ENCODE measurements at regions of chr22 and their contacts with region 1.

Region 1: GRCh38 chr22:36856121-36856791 is 4.5 kb upstream of the NCF4 start:
- DNase-seq: peak; percentile 84 to 99 (median 94)
- ATAC-seq: peak; percentile 71
- H3K4me3 ChIP-seq: no peak overlapping the region
- H3K4me3 Mint-ChIP-seq: peak overlapping the region; percentile 65
- H3K27ac ChIP-seq: no peak overlapping the region
- H3K27ac Mint-ChIP-seq: no peak overlapping the region
- H3K4me1 ChIP-seq: peaks cover 32% of the 10 kb centered on the region
- H3K4me1 Mint-ChIP-seq: peaks cover 17% of the 10 kb centered on the region
- H3K27me3 ChIP-seq: no peaks in the 10 kb centered on the region
- H3K27me3 Mint-ChIP-seq: peaks cover 5% of the 10 kb centered on the region
- CTCF ChIP-seq: peak; percentile 100

Region 2: GRCh38 chr22:36546092-36546804 is 310.0 kb before region 1 on chr22:
- CTCF ChIA-PET with region 1: no interaction called
- POLR2A ChIA-PET with region 1: no interaction called
- intact Hi-C with region 1: loop called in 1 of 2 experiments (anchors 5 kb)
- DNase-seq: peak in 7 of 14 experiments; percentile 9 to 60 (median 28)
- ATAC-seq: peak; percentile 61
- H3K4me3 ChIP-seq: no peak overlapping the region
- H3K4me3 Mint-ChIP-seq: no peak overlapping the region
- H3K27ac ChIP-seq: no peak overlapping the region
- H3K27ac Mint-ChIP-seq: no peak overlapping the region
- H3K4me1 ChIP-seq: peaks cover 14% of the 10 kb centered on the region
- H3K4me1 Mint-ChIP-seq: no peaks in the 10 kb centered on the region
- H3K27me3 ChIP-seq: peaks cover 0 to 2% of the 10 kb centered on the region in 2 experiments
- H3K27me3 Mint-ChIP-seq: peaks cover 39% of the 10 kb centered on the region
- CTCF ChIP-seq: no peak

Region 3: DNA sequence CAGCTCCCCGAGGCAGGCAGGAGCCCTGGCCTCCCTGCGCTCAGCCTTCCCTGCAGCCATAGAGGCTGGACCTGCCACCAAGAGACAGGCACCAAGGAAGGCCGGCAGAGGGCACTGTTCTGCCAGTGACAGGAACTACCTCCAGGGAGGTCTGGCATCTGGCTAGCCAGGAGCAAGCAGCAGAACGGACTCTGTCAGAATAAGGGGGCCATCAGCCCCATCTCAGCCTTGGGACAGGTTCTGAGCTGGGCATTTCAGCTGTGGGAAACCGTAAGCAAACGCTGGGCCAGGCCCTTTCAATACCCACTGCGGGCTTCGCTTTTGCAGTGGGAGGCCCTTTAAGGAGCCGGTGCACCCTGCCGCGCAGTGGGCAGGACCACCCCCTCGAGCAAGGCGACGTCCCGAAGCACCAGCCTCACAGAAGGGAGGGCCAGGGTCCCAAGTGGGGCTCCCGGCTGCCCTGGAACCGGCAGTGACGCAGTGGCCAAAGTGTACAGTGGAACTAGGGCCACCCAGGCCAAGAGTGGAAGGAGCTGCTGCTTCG is 98.5 kb before region 1 on chr22:
- CTCF ChIA-PET with region 1: interaction called, 3 read pairs
- POLR2A ChIA-PET with region 1: no interaction called
- intact Hi-C with region 1: loop called in 1 of 2 experiments (anchors 1 kb)
- DNase-seq: peak; percentile 58 to 83 (median 72)
- ATAC-seq: peak; percentile 79
- H3K4me3 ChIP-seq: no peak overlapping the region
- H3K4me3 Mint-ChIP-seq: no peak overlapping the region
- H3K27ac ChIP-seq: no peak overlapping the region
- H3K27ac Mint-ChIP-seq: no peak overlapping the region
- H3K4me1 ChIP-seq: peaks cover 4% of the 10 kb centered on the region
- H3K4me1 Mint-ChIP-seq: peaks cover 4% of the 10 kb centered on the region
- H3K27me3 ChIP-seq: peaks cover under 1 to 10% of the 10 kb centered on the region in 2 experiments
- H3K27me3 Mint-ChIP-seq: peaks cover 13% of the 10 kb centered on the region
- CTCF ChIP-seq: peak; percentile 75

Region 4: GRCh38 chr22:36781656-36782627 is 74.3 kb before region 1 on chr22:
- CTCF ChIA-PET with region 1: interaction called, 30 read pairs
- POLR2A ChIA-PET with region 1: interaction called, 16 read pairs
- intact Hi-C with region 1: loop called (anchors 1 kb)
- DNase-seq: peak; percentile 73 to 95 (median 87)
- ATAC-seq: peak; percentile 96
- H3K4me3 ChIP-seq: no peak overlapping the region
- H3K4me3 Mint-ChIP-seq: no peak overlapping the region
- H3K27ac ChIP-seq: no peak overlapping the region
- H3K27ac Mint-ChIP-seq: peak overlapping the region; percentile 33
- H3K4me1 ChIP-seq: peaks cover 16% of the 10 kb centered on the region
- H3K4me1 Mint-ChIP-seq: peaks cover 20% of the 10 kb centered on the region
- H3K27me3 ChIP-seq: no peaks in the 10 kb centered on the region
- H3K27me3 Mint-ChIP-seq: no peaks in the 10 kb centered on the region
- CTCF ChIP-seq: peak; percentile 97

Region 5: DNA sequence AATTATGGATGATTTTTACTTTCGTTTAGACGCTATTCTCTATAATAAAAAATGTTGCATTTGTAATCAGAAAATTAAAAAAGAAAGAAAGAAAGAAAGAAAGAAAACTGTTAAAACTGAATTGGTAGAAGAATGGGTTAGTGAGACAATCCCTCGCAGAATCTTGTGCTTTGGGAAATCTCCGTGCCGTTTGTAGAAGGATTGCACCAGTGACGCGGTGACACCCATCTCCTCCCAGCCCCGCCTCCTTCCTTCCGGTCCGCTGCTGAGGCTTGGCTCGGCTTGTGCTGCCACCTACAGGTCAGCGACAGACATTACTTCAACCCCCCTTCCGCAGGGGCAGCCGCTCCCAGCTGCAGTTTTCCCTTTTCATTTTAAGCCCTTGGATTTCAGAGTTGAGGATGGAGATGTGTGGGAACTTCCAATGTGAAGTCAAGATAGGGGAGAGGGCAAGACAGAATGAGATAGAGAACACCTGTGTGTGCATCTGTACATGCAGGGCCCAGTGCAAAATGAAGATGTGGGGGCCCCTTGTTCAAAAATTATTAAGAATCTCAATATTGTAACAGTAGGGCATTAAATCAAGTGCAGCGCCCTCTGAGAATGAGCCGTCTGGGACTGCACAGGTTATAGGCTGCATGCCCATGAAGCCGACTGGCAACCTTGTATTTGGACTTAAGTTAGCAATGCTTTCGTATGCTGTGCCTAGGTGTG is 121.8 kb after region 1 on chr22:
- CTCF ChIA-PET with region 1: interaction called, 16 read pairs
- POLR2A ChIA-PET with region 1: no interaction called
- intact Hi-C with region 1: loop called (anchors 1 kb)
- DNase-seq: peak; percentile 83 to 95 (median 88)
- ATAC-seq: peak; percentile 88
- H3K4me3 ChIP-seq: peak overlapping the region; percentile 77
- H3K4me3 Mint-ChIP-seq: peak overlapping the region; percentile 97
- H3K27ac ChIP-seq: peak overlapping the region; percentile 16 to 62
- H3K27ac Mint-ChIP-seq: peak overlapping the region; percentile 92
- H3K4me1 ChIP-seq: peaks cover 15% of the 10 kb centered on the region
- H3K4me1 Mint-ChIP-seq: peaks cover 8% of the 10 kb centered on the region
- H3K27me3 ChIP-seq: peaks cover 0 to 5% of the 10 kb centered on the region in 2 experiments
- H3K27me3 Mint-ChIP-seq: peaks cover 5% of the 10 kb centered on the region
- CTCF ChIP-seq: peak; percentile 88

Measured in CD4-positive, alpha-beta T cell (primary cell).